ENCODE measurements at regions of chr5 and their contacts with region 1.

Region 1: GRCh38 chr5:126339215-126339805 is 83.9 kb upstream of the GRAMD2B start:
- DNase-seq: no peak
- H3K4me3 ChIP-seq: no peak overlapping the region
- H3K27ac ChIP-seq: no peak overlapping the region
- H3K4me1 ChIP-seq: peaks cover 0 to 7% (median 0%) of the 10 kb centered on the region in 4 donors
- H3K27me3 ChIP-seq: no peaks in the 10 kb centered on the region
- CTCF ChIP-seq: peak; percentile 70 to 82 (median 79)
- EP300 ChIP-seq: no peak
- POLR2A ChIP-seq: no peak

Region 2: GRCh38 chr5:126267436-126267835 is 71.9 kb before region 1 on chr5:
- intact Hi-C with region 1: no loop called
- DNase-seq: no peak
- H3K4me3 ChIP-seq: no peak overlapping the region
- H3K27ac ChIP-seq: no peak overlapping the region
- H3K4me1 ChIP-seq: no peaks in the 10 kb centered on the region
- H3K27me3 ChIP-seq: no peaks in the 10 kb centered on the region
- CTCF ChIP-seq: no peak
- EP300 ChIP-seq: no peak
- POLR2A ChIP-seq: no peak

Region 3: GRCh38 chr5:126544087-126544740 is 204.9 kb after region 1 on chr5:
- intact Hi-C with region 1: loop called (anchors 1 kb)
- DNase-seq: no peak
- H3K4me3 ChIP-seq: no peak overlapping the region
- H3K27ac ChIP-seq: no peak overlapping the region
- H3K4me1 ChIP-seq: no peaks in the 10 kb centered on the region
- H3K27me3 ChIP-seq: no peaks in the 10 kb centered on the region
- CTCF ChIP-seq: peak in 2 of 4 experiments; percentile 24 to 26
- EP300 ChIP-seq: no peak
- POLR2A ChIP-seq: no peak

Region 4: DNA sequence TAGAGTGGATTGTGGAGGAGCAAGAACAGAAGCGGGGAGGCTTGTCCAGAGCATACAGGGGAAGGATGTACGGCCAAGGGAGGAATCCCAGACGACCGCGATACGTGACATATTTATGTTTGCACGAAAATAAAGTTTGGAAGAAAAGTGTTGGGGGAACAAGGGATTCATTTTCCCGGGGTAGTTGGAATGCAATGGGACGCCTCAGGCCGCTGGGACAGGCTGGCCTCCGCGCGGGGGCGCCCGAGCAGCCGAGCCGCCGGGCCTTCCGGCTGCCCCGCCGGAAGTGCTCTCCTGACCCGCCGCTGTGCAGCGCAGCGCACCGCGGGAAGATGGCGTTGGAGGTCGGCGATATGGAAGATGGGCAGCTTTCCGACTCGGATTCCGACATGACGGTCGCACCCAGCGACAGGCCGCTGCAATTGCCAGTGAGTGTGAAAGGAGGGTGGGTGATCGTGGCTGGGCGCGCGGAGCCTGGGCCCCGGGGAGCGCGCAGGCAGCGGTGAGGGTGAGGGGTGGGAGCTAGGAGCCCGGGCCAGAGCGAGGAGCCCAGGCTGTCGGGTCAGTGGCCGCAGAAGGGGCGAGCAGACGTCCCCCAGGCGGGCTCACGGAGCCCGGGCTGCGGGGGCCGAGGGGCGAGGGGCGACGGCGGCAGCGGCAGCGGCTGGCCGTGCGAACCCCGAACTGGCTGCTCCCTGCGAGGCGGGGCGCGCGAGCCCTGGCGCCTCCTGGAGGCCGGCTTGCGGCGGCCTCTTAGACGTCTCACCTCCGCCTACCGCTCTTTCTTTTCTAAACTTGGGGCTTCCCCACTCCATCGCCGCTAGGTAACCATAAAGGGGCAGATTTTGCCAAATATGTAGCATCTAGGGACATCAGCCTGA is 261.6 kb after region 1 on chr5 and contains the start of gene PHAX:
- intact Hi-C with region 1: loop called (anchors 2 kb)
- DNase-seq: peak; percentile 84
- H3K4me3 ChIP-seq: peak within 1 kb of the TSS; percentile 74 to 98 (median 95)
- H3K27ac ChIP-seq: peak within 1 kb of the TSS; percentile 84 to 94 (median 90)
- H3K4me1 ChIP-seq: peaks cover 0 to 41% (median 35%) of the 10 kb centered on the region in 4 donors
- H3K27me3 ChIP-seq: no peaks in the 10 kb centered on the region
- CTCF ChIP-seq: peak; percentile 26 to 56 (median 40)
- EP300 ChIP-seq: no peak
- POLR2A ChIP-seq: no peak
- total RNA-seq, gene PHAX: 38.8 to 58.5 (median 49.0) TPM

Region 5: DNA sequence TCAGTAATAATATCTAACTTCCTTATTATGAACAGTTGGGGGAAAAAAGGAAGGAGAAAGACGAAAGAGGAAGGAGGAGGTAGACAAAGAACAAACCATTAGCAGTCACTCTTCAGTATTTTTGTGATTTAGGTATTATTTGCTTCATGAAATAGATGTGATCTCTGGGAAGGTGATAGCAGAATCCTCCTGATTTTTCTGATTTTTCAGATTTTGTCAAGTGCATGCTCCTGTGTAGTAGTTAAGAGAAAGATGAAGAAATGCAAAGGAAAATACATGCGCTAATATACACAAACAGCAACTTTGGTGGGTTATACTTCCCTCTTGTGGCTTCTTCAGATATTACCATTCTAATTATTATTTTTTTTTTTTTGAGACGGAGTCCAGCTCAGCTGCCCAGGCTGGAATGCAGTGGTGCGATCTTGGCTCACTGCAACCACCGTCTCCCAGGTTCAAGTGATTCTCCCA is 469.2 kb after region 1 on chr5:
- intact Hi-C with region 1: no loop called
- DNase-seq: no peak
- H3K4me3 ChIP-seq: no peak overlapping the region
- H3K27ac ChIP-seq: no peak overlapping the region
- H3K4me1 ChIP-seq: no peaks in the 10 kb centered on the region
- H3K27me3 ChIP-seq: no peaks in the 10 kb centered on the region
- CTCF ChIP-seq: peak in 2 of 4 experiments; percentile 31 to 53
- EP300 ChIP-seq: no peak
- POLR2A ChIP-seq: no peak

Region 6: GRCh38 chr5:127011961-127012644 is 672.8 kb after region 1 on chr5:
- intact Hi-C with region 1: no loop called
- DNase-seq: no peak
- H3K4me3 ChIP-seq: no peak overlapping the region
- H3K27ac ChIP-seq: no peak overlapping the region
- H3K4me1 ChIP-seq: peaks cover 0 to 9% (median 0%) of the 10 kb centered on the region in 4 donors
- H3K27me3 ChIP-seq: no peaks in the 10 kb centered on the region
- CTCF ChIP-seq: no peak
- EP300 ChIP-seq: no peak
- POLR2A ChIP-seq: no peak

Measured in sigmoid colon (tissue), 7 donors.